ENCODE measurements at regions of chr11 and their contacts with region 1.

Region 1: DNA sequence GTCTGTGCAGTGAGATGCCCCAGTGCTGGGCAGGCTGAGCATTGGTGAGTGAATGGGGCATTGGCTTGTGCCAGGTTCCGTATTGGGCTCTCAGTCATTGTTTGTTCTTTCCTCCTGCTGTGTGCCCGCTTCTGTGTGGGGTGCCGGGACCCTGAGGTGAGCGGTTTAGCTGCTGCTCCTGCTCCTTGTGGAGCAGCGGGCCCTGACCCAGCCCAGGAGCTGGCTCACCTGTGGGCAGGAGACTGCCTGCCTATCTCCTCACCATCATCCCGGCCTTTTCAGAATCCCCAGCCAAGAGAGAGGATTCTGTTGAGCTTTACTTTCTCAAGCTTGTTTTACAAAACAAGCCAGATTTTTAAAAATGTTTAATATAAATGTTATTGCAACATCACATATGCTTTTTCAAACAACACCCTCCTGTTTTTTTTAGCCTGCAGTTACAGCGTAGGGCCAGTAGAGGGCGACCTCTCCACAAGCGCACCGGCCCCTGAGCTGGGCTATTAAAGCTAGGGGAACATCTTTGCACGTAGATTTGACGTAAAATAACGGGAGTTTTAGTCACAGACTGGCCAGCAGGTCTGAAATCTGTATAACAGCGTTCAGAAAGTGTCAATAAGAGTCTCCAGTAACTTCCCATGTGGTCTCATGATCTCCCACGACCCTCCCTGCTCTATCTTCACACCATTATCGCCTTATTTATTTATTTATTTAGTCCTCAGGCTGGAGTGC is 25.1 kb upstream of the RELT start:
- DNase-seq: peak; percentile 76
- ATAC-seq: peak; percentile 76
- H3K4me3 Mint-ChIP-seq: no peak overlapping the region
- H3K27ac Mint-ChIP-seq: no peak overlapping the region
- H3K4me1 Mint-ChIP-seq: peaks cover 18% of the 10 kb centered on the region
- H3K27me3 Mint-ChIP-seq: no peaks in the 10 kb centered on the region

Region 2: GRCh38 chr11:73204711-73205121 is 146.4 kb before region 1 on chr11:
- CTCF ChIA-PET with region 1: no interaction called
- DNase-seq: no peak
- ATAC-seq: no peak
- H3K4me3 Mint-ChIP-seq: no peak overlapping the region
- H3K27ac Mint-ChIP-seq: no peak overlapping the region
- H3K4me1 Mint-ChIP-seq: peaks cover 8% of the 10 kb centered on the region
- H3K27me3 Mint-ChIP-seq: peaks cover 37% of the 10 kb centered on the region

Region 3: DNA sequence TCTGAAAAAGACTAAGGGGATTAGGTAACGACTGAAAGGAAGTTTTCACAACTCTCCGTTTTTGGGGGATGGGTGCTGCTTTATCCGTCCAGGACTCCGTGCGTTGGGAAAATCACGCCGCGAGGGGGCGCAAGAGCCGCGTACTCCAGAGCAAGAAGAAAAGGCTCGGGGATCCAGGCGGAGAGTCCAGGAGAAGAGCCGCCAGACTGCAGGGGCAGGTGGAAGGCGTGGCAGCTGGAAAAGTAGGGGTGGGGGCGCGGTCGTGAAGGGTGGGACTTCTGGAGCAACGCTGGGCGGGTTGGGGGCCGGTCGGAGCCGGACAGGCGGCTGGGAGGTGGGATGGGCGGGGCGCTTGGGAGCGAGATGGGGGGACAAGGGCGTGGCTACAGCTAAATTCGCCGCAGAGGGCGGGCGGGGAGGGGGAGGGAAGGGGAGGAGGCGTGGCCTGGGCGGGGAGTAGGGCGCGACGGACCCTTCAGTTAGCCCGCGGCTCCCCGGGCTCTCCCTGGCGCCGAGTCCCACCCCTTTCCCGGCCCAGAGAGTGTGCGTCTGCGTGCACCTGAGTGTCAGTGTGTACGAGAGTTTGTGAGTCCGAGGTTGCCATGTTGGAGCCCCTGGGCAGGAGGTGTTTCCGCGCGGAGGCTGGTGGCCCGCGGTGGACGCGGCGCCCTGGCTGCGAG is 43.6 kb before region 1 on chr11:
- CTCF ChIA-PET with region 1: interaction called, 34 read pairs
- DNase-seq: peak; percentile 93
- ATAC-seq: peak; percentile 76
- H3K4me3 Mint-ChIP-seq: peak overlapping the region; percentile 74
- H3K27ac Mint-ChIP-seq: peak overlapping the region; percentile 44
- H3K4me1 Mint-ChIP-seq: peaks cover 6% of the 10 kb centered on the region
- H3K27me3 Mint-ChIP-seq: peaks cover 33% of the 10 kb centered on the region

Region 4: GRCh38 chr11:73335204-73335923 is 15.7 kb before region 1 on chr11:
- CTCF ChIA-PET with region 1: interaction called, 44 read pairs
- DNase-seq: peak; percentile 81
- ATAC-seq: peak; percentile 72
- H3K4me3 Mint-ChIP-seq: no peak overlapping the region
- H3K27ac Mint-ChIP-seq: no peak overlapping the region
- H3K4me1 Mint-ChIP-seq: peaks cover 2% of the 10 kb centered on the region
- H3K27me3 Mint-ChIP-seq: no peaks in the 10 kb centered on the region

Region 5: DNA sequence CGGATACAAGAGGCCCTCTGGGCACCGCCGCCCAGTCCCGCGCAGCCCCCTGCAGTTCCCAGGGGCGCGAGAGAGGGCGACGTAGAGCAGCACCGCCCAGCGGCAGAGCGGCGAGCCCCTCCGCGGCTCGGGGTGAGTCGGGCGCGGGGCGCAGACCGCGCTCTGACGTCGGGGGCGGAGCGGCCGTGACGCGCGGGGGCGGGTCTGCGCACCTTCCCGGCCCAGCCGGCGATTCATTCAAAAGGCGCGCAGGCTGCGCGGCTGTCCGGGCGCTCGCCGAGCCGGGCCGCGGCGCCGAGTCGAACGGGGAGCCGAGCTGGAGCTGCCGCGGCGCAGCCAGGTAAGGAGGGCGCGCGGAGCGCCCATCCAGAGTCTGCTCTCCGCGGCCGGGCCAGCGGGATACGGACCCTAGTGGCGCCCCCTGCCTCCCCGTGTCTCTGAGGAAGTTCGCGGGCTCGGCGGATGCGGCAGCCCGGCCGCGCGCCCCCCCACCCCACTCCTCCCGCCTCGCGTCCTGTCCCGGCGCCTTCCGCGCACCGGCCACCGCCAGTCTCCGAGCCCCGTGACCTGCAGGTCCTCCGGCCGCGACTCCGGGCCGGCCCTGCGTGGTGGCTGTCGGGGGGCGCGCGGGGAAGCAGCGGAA is 25.2 kb after region 1 on chr11 and contains the start of gene RELT:
- CTCF ChIA-PET with region 1: interaction called, 17 read pairs
- DNase-seq: peak; percentile 94
- ATAC-seq: peak; percentile 81
- H3K4me3 Mint-ChIP-seq: peak within 1 kb of the TSS; percentile 97
- H3K27ac Mint-ChIP-seq: peak within 1 kb of the TSS; percentile 99
- H3K4me1 Mint-ChIP-seq: peaks cover 49% of the 10 kb centered on the region
- H3K27me3 Mint-ChIP-seq: no peaks in the 10 kb centered on the region
- total RNA-seq, gene RELT: 31.2 to 39.6 TPM

Region 6: GRCh38 chr11:73393479-73394380 is 42.7 kb after region 1 on chr11:
- CTCF ChIA-PET with region 1: interaction called, 130 read pairs
- DNase-seq: peak; percentile 77
- ATAC-seq: peak; percentile 74
- H3K4me3 Mint-ChIP-seq: no peak overlapping the region
- H3K27ac Mint-ChIP-seq: no peak overlapping the region
- H3K4me1 Mint-ChIP-seq: no peaks in the 10 kb centered on the region
- H3K27me3 Mint-ChIP-seq: no peaks in the 10 kb centered on the region

Region 7: DNA sequence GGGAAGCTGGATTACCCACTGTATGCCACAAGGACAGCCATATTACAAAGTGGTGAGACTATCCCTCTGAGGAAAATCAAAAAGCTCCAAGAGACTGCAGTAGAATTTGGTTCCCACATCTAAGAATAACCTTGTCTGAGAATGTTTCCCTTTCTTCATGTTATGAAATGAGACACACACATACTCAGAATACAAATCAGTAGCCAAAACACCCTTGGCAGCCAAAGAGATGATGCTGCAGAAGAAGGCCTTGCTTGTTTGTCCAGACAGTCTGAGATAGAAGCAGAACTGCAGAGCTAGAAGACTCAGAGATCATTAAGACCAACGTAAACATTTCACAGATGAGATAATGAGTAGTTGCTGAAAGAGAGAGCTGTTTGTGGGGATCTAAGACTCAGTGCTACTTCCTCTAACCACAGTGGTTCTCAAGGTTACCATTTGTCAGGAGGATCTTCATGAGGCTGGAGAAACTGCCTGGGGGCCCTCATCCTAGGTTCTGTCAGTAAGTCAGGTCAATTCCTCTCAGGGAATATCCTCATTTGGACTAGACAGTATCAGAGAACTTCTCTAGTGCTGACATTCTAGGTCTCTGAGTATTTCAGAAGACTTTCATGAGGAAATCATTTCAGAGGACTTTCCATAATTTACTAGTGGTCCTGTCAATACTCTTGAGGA is 64.0 kb after region 1 on chr11:
- CTCF ChIA-PET with region 1: interaction called, 15 read pairs
- DNase-seq: no peak
- ATAC-seq: peak; percentile 43
- H3K4me3 Mint-ChIP-seq: no peak overlapping the region
- H3K27ac Mint-ChIP-seq: no peak overlapping the region
- H3K4me1 Mint-ChIP-seq: peaks cover 8% of the 10 kb centered on the region
- H3K27me3 Mint-ChIP-seq: no peaks in the 10 kb centered on the region

Region 8: DNA sequence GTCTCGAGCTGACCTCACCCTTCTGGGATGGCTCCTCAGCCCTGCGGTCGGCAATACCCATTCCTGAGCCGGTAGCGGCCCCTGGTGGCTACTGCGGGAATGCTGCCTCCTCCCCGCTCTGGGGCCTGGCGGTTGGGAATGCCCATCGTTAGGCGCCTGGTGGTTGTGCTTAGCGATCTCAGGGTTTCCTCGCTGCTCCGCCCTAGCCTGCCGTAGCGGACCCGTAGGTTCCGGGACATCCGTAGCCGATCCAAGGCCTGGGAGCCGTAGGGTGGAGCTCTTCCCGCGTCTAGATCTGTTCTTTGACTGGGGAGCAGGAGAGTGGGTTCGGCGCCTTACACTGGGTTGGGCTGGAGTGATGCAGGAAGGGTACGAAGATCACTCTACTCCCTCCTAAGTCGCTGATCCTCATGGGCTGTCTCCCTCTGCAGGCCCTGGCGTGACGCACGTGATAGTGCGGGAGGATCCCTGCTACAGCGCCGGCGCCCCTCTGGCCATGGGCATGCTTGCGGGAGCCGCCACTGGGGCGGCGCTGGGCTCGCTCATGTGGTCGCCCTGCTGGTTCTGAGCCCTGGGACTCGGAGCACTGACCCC is 310.1 kb after region 1 on chr11:
- CTCF ChIA-PET with region 1: interaction called, 66 read pairs
- DNase-seq: peak; percentile 87
- ATAC-seq: peak; percentile 93
- H3K4me3 Mint-ChIP-seq: no peak overlapping the region
- H3K27ac Mint-ChIP-seq: no peak overlapping the region
- H3K4me1 Mint-ChIP-seq: peaks cover 3% of the 10 kb centered on the region
- H3K27me3 Mint-ChIP-seq: no peaks in the 10 kb centered on the region